Esophagus muscularis mucosa (tissue), 4 donors: ENCODE measurements at regions of chr6 and their contacts with region 1.

Region 1: DNA sequence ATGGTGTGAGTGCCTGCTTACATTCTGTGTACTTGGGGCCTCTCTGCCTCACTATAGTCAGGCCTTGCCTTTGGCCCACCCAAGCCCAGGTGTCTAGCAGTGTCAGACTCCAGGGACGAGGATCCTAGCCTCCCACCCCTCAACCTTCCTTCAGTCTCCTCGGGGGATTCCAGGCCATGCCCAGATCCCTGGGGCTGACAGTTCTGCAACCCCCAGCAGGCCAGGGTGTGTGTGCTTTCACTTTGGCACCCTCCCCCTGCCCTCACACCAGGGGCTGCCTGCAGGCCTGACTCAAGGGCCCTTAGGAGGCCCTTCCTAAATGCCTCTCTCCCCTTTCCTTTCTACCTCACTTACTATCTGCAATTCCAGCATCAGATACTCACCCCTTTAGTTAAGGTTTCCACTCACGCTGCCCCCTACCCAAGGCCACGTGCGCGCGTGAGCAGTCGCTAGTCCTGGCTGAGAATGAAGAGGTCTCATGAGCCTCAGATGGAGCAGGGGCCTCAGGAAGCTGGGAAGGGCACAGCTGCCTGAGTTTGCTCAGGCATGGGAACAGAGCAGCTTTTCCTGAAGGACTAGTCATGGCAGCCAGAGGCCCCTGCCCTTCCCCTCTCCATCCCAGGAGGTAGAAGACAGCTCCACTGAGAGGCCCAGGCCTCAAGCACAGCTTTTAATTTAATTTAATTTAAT is 859 bp upstream of the CLPS start:
- DNase-seq: no peak
- H3K4me3 ChIP-seq: no peak overlapping the region
- H3K27ac ChIP-seq: no peak overlapping the region
- H3K4me1 ChIP-seq: no peaks in the 10 kb centered on the region
- H3K27me3 ChIP-seq: peaks cover 0 to 39% (median 0%) of the 10 kb centered on the region in 4 donors
- CTCF ChIP-seq: no peak
- EP300 ChIP-seq: no peak
- POLR2A ChIP-seq: no peak

Region 2: DNA sequence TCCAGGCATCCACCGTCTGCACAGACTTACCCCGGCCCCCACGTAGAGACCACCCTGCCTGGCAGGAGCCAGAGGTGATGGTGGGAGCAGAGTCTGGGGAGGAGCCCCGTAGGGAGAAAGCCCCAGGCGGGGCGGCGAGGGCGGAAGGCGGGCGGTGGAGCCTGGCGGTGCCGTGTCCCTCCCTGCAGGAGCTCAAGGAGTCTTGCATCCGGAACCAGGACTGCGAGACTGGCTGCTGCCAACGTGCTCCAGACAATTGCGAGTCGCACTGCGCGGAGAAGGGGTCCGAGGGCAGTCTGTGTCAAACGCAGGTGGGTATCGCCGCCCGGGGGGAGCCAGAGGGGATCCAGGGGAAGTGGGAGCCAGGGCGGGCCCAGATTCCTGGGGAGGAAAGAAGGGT is 11.2 kb before region 1 on chr6:
- intact Hi-C with region 1: loop called (anchors 1 kb)
- DNase-seq: no peak
- H3K4me3 ChIP-seq: no peak overlapping the region
- H3K27ac ChIP-seq: no peak overlapping the region
- H3K4me1 ChIP-seq: peaks cover 0 to 5% (median 2%) of the 10 kb centered on the region in 4 donors
- H3K27me3 ChIP-seq: peaks cover 0 to 85% (median 20%) of the 10 kb centered on the region in 4 donors
- CTCF ChIP-seq: no peak
- EP300 ChIP-seq: no peak
- POLR2A ChIP-seq: no peak